Common myeloid progenitor, CD34-positive (primary cell): ENCODE measurements at regions of chr6 and their contacts with region 1.

Region 1: GRCh38 chr6:156883497-156884252 is 106.5 kb downstream of the ARID1B start:
- DNase-seq: peak in 2 of 3 donors; percentile 52 to 70
- H3K4me3 ChIP-seq: peak overlapping the region in 5 of 7 experiments; percentile 29 to 63 (median 53)
- H3K27ac ChIP-seq: peak overlapping the region; percentile 20 to 63
- H3K4me1 ChIP-seq: peaks cover 19 to 64% (median 40%) of the 10 kb centered on the region in 4 experiments
- H3K27me3 ChIP-seq: no peaks in the 10 kb centered on the region

Region 2: GRCh38 chr6:156866220-156867015 is 17.3 kb before region 1 on chr6:
- CTCF ChIA-PET with region 1: interaction called, 10 read pairs
- POLR2A ChIA-PET with region 1: no interaction called
- DNase-seq: peak in 2 of 3 donors; percentile 55 to 66
- H3K4me3 ChIP-seq: peak overlapping the region in 1 of 7 experiments; percentile 7
- H3K27ac ChIP-seq: peak overlapping the region in 1 of 2 experiments; percentile 61
- H3K4me1 ChIP-seq: peaks cover 0 to 47% (median 18%) of the 10 kb centered on the region in 4 experiments
- H3K27me3 ChIP-seq: no peaks in the 10 kb centered on the region

Region 3: DNA sequence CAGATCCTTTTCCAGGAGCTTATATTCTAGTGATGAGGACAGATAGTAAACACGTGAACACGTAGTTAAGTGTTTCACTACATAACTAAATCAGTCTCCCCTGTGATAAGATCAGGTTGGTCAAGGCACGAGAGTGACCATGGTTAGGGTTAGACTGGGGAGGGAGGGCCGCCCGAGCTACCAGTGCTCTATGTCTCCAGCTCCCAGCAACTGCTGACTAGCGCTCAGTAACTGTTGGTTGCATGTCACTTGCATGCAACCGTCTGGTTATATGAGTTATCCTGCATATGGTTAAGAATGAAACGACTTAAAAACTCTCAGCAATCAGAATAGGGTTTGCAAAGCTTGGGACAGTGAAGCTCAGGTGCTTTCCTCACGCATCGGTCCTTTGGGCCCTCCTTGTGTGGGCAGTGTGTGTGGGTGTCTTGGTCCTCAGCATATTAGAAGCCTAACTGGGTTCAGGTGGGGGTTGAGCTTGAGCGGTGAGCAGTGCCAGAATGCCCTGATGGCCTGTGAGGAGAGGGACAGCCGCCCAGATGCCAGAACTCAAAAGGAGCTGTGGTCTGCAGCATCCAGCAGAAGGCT is 14.4 kb after region 1 on chr6:
- CTCF ChIA-PET with region 1: interaction called, 12 read pairs
- POLR2A ChIA-PET with region 1: no interaction called
- DNase-seq: no peak
- H3K4me3 ChIP-seq: no peak overlapping the region
- H3K27ac ChIP-seq: no peak overlapping the region
- H3K4me1 ChIP-seq: peaks cover 1 to 26% (median 10%) of the 10 kb centered on the region in 4 experiments
- H3K27me3 ChIP-seq: no peaks in the 10 kb centered on the region